ENCODE measurements at regions of chr21 and their contacts with region 1.

Region 1: DNA sequence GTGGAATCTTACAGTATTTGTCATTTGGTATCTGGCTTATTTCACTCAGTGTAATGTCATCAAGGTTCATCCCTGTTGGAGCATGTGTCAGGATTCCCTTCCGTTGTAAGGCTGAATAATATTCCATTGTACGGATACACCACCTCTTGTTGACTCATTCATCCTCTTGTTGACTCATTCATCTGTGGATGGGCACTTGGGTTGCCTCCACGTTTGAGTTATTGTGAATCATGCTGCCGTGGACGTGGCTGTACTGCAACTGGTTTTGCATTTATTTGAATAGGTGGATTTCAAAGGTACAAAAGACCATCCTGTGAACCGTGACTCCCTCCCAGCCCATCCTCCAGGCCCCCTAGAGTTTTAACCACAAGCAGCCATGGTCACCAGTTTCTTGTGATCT is 11.9 kb upstream of the TCP10L start:
- DNase-seq: no peak
- H3K4me3 ChIP-seq: no peak overlapping the region
- H3K4me3 Mint-ChIP-seq: no peak overlapping the region
- H3K27ac Mint-ChIP-seq: no peak overlapping the region
- H3K4me1 ChIP-seq: peaks cover 14% of the 10 kb centered on the region
- H3K4me1 Mint-ChIP-seq: peaks cover 10% of the 10 kb centered on the region
- H3K27me3 ChIP-seq: no peaks in the 10 kb centered on the region
- H3K27me3 Mint-ChIP-seq: no peaks in the 10 kb centered on the region
- CTCF ChIP-seq: no peak

Region 2: GRCh38 chr21:32392880-32393676 is 204.1 kb before region 1 on chr21 and contains the start of gene URB1:
- CTCF ChIA-PET with region 1: interaction called, 7 read pairs
- POLR2A ChIA-PET with region 1: no interaction called
- intact Hi-C with region 1: loop called (anchors 2 kb)
- DNase-seq: peak; percentile 91 to 94
- H3K4me3 ChIP-seq: peak within 1 kb of the TSS; percentile 94
- H3K4me3 Mint-ChIP-seq: peak within 1 kb of the TSS; percentile 89
- H3K27ac Mint-ChIP-seq: peak within 1 kb of the TSS; percentile 89
- H3K4me1 ChIP-seq: peaks cover 8% of the 10 kb centered on the region
- H3K4me1 Mint-ChIP-seq: no peaks in the 10 kb centered on the region
- H3K27me3 ChIP-seq: no peaks in the 10 kb centered on the region
- H3K27me3 Mint-ChIP-seq: peaks cover 2% of the 10 kb centered on the region
- CTCF ChIP-seq: no peak
- total RNA-seq, gene URB1: 17.1 and 21.1 TPM in 2 replicates

Region 3: DNA sequence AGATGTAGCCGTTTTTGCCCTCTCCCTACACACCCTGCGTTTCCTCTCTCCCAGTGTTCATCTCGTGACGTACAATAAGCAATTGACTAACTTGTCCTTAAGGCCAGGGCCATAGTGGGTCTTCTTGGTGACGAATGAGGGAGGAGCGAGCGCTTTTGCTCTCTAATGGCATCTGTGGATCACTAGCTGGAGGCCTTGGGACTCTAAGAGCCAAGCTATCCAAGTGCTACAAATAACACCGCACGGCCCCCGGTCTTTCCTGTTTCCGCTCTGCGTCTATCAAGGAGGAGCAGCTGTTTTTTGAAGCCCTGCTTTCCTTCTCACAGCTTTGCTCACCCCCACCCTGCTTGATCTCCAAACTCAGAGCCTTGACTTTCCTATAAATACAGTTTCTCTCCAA is 159.5 kb before region 1 on chr21:
- CTCF ChIA-PET with region 1: no interaction called
- POLR2A ChIA-PET with region 1: no interaction called
- intact Hi-C with region 1: loop called (anchors 1 kb)
- DNase-seq: no peak
- H3K4me3 ChIP-seq: no peak overlapping the region
- H3K4me3 Mint-ChIP-seq: no peak overlapping the region
- H3K27ac Mint-ChIP-seq: no peak overlapping the region
- H3K4me1 ChIP-seq: 0 out of 2 replicates have a peak, but pooled peaks cover 8% of the 10 kb centered on the region
- H3K4me1 Mint-ChIP-seq: peaks cover 10% of the 10 kb centered on the region
- H3K27me3 ChIP-seq: no peaks in the 10 kb centered on the region
- H3K27me3 Mint-ChIP-seq: no peaks in the 10 kb centered on the region
- CTCF ChIP-seq: no peak

Region 4: DNA sequence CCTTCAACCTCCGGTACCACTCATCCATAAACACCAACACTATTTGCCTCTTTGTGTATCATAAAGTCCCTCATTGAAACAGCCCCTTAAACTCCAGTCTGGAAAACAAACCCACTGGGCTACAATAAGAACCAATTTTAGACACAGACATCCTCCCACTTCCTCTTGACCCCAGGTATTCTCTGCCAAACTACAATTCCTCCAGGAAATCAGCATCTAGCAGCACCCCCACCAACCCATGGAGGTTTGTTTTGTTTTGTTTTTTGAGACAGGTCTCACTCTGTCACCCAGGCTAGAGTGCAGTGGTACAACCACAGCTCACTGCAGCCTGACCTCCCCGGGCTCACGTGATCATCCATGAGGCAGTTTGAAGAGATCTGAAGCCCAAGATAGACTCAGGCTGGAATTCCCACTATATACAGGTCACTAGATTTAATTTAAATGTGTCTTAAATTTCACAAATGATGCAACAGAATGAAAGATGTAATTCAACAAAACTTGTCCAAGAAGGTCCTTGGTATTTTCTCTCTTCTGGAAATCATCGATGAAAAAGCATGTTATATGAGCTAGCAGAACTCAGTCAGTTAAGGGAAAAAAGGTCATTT is 42.3 kb before region 1 on chr21:
- CTCF ChIA-PET with region 1: no interaction called
- POLR2A ChIA-PET with region 1: no interaction called
- intact Hi-C with region 1: no loop called
- DNase-seq: no peak
- H3K4me3 ChIP-seq: no peak overlapping the region
- H3K4me3 Mint-ChIP-seq: no peak overlapping the region
- H3K27ac Mint-ChIP-seq: no peak overlapping the region
- H3K4me1 ChIP-seq: no peaks in the 10 kb centered on the region
- H3K4me1 Mint-ChIP-seq: no peaks in the 10 kb centered on the region
- H3K27me3 ChIP-seq: no peaks in the 10 kb centered on the region
- H3K27me3 Mint-ChIP-seq: no peaks in the 10 kb centered on the region
- CTCF ChIP-seq: no peak

Region 5: DNA sequence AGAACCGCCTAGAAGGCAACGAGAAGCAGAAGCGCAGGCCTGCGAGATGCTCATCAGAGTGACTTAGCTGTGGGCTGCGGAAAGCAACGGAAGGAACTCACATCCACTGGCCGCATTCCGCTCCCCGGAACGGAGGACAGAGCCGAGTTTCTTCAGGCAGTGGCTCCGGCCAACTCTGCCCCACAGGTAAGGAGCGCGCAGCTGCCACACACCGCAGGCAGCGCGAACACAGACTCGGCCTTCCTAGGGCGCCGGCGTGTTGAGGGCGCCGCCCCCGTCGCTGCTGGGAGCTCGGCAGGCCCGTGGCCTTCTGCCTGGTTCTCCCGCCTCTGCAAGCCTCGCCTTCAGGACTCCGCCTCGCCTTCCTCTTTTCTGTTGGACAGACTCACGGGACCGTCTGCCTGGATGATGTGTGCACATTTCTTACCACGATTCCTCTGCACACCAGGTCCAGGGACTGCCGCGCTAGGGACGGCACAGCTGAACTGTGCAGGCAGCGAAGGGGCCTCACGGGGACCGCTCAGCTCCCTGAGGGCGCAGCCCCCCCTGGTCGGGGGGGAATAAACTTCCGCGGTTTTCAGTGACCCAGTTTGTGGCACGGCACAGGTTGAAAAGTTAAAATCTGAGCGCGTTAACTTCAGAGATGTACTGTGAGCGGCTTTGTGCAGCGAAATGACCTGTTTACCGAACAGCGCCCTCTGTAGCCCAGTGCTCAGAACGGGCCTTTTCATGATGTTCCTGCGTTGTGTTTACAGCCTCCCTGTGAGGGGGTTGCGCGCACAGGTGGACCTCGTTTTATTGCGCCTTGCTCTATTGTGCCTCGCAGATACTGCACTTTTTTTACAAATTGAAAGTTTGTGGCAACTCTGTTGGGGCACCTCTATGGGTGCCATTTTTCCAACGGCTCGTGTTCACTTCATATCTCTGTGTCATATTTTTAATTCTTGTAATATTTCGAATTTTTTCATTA is 27.7 kb before region 1 on chr21:
- CTCF ChIA-PET with region 1: interaction called, 9 read pairs
- POLR2A ChIA-PET with region 1: no interaction called
- intact Hi-C with region 1: loop called (anchors 2 kb)
- DNase-seq: peak; percentile 77 to 81
- H3K4me3 ChIP-seq: peak overlapping the region; percentile 51
- H3K4me3 Mint-ChIP-seq: peak overlapping the region; percentile 92
- H3K27ac Mint-ChIP-seq: no peak overlapping the region
- H3K4me1 ChIP-seq: peaks cover 5% of the 10 kb centered on the region; the same call in 1 of the 2 replicates
- H3K4me1 Mint-ChIP-seq: no peaks in the 10 kb centered on the region
- H3K27me3 ChIP-seq: no peaks in the 10 kb centered on the region
- H3K27me3 Mint-ChIP-seq: no peaks in the 10 kb centered on the region
- CTCF ChIP-seq: peak; percentile 76 to 79

Region 6: DNA sequence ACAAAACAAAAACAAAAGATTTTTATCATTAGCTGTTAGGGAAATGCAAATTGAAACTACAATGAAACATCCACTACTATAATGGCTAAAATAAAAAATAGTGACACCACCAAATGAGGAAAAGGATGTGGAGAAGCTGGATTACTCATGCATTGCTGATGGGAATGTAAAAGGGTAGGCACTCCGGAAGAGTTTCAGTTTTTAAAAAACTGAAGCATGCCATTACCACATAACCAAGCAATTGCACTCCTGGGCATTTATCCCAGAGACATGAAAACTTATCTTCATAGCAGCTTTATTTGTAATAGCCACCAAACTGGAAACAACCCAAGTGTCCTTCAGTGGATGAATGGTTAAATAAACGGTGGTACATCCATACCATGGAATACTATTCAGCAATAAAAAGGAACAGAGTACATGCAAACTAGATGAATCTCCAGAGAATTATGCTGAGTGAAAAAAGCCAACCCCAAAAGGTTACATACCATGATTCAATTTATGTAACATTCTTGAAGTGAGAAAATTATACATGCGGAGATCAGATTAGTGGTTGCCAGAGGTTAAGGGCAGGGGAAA is 29.5 kb after region 1 on chr21:
- CTCF ChIA-PET with region 1: interaction called, 10 read pairs
- POLR2A ChIA-PET with region 1: no interaction called
- intact Hi-C with region 1: no loop called
- DNase-seq: no peak
- H3K4me3 ChIP-seq: no peak overlapping the region
- H3K4me3 Mint-ChIP-seq: no peak overlapping the region
- H3K27ac Mint-ChIP-seq: no peak overlapping the region
- H3K4me1 ChIP-seq: no peaks in the 10 kb centered on the region
- H3K4me1 Mint-ChIP-seq: no peaks in the 10 kb centered on the region
- H3K27me3 ChIP-seq: no peaks in the 10 kb centered on the region
- H3K27me3 Mint-ChIP-seq: peaks cover 1% of the 10 kb centered on the region
- CTCF ChIP-seq: no peak

Measured in Caco-2 (cell line).